Transverse colon (tissue), 4 donors: ENCODE measurements at regions of chr15 and their contacts with region 1.

Region 1: DNA sequence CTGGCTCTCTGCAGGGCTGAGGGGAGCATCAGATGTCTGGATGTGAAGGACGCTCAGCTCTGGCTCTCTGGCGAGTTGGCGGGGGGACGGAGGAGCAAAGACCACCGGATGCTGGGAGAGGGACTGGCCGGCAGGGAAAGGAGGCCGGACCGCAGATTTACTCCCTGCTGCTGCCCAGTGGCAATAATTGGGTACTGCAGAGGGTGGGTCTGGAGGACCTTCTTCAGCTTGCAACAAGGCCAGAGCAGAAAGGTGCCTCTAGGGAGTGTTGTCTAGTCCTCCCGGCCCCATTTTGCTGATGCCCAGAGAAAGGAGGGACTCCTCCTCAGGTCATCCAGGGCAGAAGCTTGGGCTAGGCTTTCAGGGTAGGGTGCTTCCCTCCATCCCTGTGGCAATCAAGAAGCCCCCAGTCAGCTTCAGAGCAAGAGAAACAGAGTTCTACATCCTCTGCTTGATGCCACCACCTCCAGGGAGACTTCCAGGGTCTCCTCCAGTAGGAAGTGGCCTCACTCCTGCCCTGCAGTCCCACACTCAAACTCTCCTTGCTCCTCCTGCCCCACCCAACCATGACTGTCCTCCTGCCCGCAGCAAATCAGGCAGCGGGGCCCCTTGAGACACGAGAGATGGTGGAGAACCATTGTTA is 20.3 kb upstream of the CSPG4 start:
- DNase-seq: peak; percentile 78
- H3K4me3 ChIP-seq: no peak overlapping the region
- H3K27ac ChIP-seq: peak overlapping the region in 3 of 4 donors; percentile 57 to 80 (median 67)
- H3K4me1 ChIP-seq: peaks cover 8 to 24% (median 10%) of the 10 kb centered on the region in 4 donors
- H3K27me3 ChIP-seq: no peaks in the 10 kb centered on the region
- CTCF ChIP-seq: peak; percentile 88 to 94 (median 92)
- EP300 ChIP-seq: no peak
- POLR2A ChIP-seq: no peak

Region 2: GRCh38 chr15:75625542-75626347 is 107.2 kb before region 1 on chr15 and contains the start of gene SNUPN:
- in situ Hi-C with region 1: no loop called
- intact Hi-C with region 1: loop called (anchors 5 kb)
- DNase-seq: peak; percentile 96
- H3K4me3 ChIP-seq: peak within 1 kb of the TSS; percentile 70 to 95 (median 93)
- H3K27ac ChIP-seq: peak within 1 kb of the TSS; percentile 95 to 98 (median 97)
- H3K4me1 ChIP-seq: peaks cover 7 to 28% (median 14%) of the 10 kb centered on the region in 4 donors
- H3K27me3 ChIP-seq: no peaks in the 10 kb centered on the region
- CTCF ChIP-seq: no peak
- EP300 ChIP-seq: no peak
- POLR2A ChIP-seq: no peak
- total RNA-seq, gene SNUPN: 9.4 to 29.5 (median 23.2) TPM

Region 3: DNA sequence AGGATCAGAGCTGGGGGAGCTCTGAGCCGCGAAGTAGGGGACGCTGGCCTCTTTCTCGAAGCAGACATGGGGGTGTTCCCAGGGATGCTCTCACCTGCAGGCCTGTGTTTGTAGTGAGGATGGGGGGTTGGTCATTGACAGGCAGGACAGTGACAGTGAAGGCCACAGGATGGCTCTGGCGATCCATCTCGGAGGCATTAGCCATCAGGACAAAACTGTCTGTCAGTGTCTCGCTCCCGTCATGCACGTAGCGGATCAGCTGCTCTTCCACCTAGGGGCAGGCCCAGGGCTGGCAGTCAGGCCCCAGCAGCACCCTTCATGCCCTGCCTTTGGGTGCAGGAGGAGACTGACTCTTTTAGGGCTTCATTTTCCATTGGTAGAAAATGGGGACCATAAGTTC is 48.3 kb before region 1 on chr15:
- in situ Hi-C with region 1: no loop called
- intact Hi-C with region 1: loop called (anchors 2 kb)
- DNase-seq: no peak
- H3K4me3 ChIP-seq: no peak overlapping the region
- H3K27ac ChIP-seq: no peak overlapping the region
- H3K4me1 ChIP-seq: peaks cover 0 to 10% (median 4%) of the 10 kb centered on the region in 4 donors
- H3K27me3 ChIP-seq: no peaks in the 10 kb centered on the region
- CTCF ChIP-seq: no peak
- EP300 ChIP-seq: no peak
- POLR2A ChIP-seq: no peak